ENCODE measurements at regions of chr1 and their contacts with region 1.

Region 1: GRCh38 chr1:61925591-61926359 is 183.5 kb downstream of the PATJ start:
- DNase-seq: peak; percentile 1
- H3K4me3 ChIP-seq: no peak overlapping the region
- H3K27ac ChIP-seq: no peak overlapping the region
- H3K4me1 ChIP-seq: no peaks in the 10 kb centered on the region
- H3K27me3 ChIP-seq: no peaks in the 10 kb centered on the region
- CTCF ChIP-seq: no peak

Region 2: DNA sequence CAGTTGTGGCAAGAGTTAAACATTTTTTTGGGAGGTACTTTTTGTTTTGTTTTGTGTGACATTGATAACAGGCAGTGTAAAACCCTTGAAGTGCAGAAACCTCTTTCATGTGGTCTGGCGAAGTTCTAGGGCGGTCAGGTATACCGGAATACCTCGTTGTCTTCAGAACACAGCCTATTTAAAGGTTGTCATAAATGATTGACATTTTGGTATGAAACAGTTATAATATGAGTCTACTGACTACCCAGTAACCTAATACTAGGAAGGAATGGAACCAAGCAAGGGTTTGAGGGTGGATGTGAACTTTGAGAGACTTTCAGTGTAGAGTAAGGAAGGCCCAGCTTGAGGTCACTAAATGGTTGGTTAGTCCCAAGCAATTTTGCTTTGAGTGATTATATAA is 143.0 kb before region 1 on chr1:
- CTCF ChIA-PET with region 1: no interaction called
- dilution Hi-C with region 1: no loop called
- in situ Hi-C with region 1: no loop called
- intact Hi-C with region 1: no loop called
- DNase-seq: no peak
- H3K4me3 ChIP-seq: no peak overlapping the region
- H3K27ac ChIP-seq: no peak overlapping the region
- H3K4me1 ChIP-seq: no peaks in the 10 kb centered on the region
- H3K27me3 ChIP-seq: no peaks in the 10 kb centered on the region
- CTCF ChIP-seq: no peak

Region 3: GRCh38 chr1:61875198-61875597 is 50.6 kb before region 1 on chr1:
- CTCF ChIA-PET with region 1: no interaction called
- dilution Hi-C with region 1: loop called (anchors 5 kb)
- in situ Hi-C with region 1: no loop called
- intact Hi-C with region 1: no loop called
- DNase-seq: no peak
- H3K4me3 ChIP-seq: no peak overlapping the region
- H3K27ac ChIP-seq: no peak overlapping the region
- H3K4me1 ChIP-seq: peaks cover 7% of the 10 kb centered on the region
- H3K27me3 ChIP-seq: no peaks in the 10 kb centered on the region
- CTCF ChIP-seq: no peak

Measured in mammary epithelial cell (primary cell).